Heart right ventricle (tissue), 16 donors: ENCODE measurements at regions of chr17 and their contacts with region 1.

Region 1: GRCh38 chr17:69480245-69480644 is 65.7 kb downstream of the MAP2K6 start:
- DNase-seq: no peak
- ATAC-seq: peak in 2 of 8 donors; percentile 63 to 69
- H3K4me3 ChIP-seq: no peak overlapping the region
- H3K27ac ChIP-seq: no peak overlapping the region
- H3K4me1 ChIP-seq: peaks cover 0 to 20% (median 4%) of the 10 kb centered on the region in 9 donors
- H3K27me3 ChIP-seq: no peaks in the 10 kb centered on the region
- CTCF ChIP-seq: no peak

Region 2: DNA sequence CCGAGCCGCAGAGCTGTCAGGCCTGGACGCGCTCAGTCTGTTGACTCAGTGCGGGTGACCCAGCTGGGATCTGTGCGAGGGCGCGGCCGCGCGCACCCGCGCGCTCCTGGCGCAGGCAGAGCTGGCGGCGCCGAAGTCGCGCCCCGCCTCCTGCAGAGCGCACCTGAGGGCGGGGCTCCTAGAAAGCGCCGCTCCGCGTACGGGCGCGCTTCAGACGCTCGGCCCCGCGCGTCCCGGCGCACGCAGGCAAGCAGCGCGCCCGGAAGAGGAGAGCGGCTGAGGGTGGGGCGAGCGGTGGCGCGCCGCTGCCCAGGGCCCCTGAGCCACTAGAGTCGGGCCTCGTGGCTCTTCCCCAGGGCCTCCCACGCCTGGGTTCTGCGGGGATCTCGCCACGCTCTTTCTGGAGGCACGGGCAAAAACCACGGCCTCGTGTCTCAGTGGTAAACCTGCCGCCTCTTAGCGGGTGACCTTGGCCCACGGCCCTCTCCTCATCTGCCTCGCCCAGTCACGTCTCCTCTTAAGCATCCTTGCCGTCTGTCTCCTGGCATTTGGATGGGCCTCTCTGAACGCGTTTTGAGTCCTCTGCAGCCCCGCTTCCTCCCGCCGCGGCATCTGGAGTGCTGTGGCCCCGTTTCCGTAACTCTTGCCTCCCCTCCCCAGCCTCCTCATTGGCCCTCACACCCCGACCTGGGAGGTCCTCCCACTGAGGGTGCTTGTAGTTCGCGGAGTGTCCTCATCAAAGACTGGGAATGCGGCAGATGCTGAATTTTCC is 153.0 kb before region 1 on chr17 and contains the start of gene ABCA5:
- intact Hi-C with region 1: loop called in 1 of 10 experiments (anchors 5 kb)
- DNase-seq: peak; percentile 78 to 86
- ATAC-seq: peak; percentile 96 to 100 (median 98)
- H3K4me3 ChIP-seq: peak within 1 kb of the TSS; percentile 59 to 95 (median 78)
- H3K27ac ChIP-seq: peak within 1 kb of the TSS; percentile 57 to 90 (median 86)
- H3K4me1 ChIP-seq: peaks cover 0 to 33% (median 12%) of the 10 kb centered on the region in 9 donors
- H3K27me3 ChIP-seq: peaks cover 0 to 7% (median 0%) of the 10 kb centered on the region in 7 donors
- CTCF ChIP-seq: no peak
- total RNA-seq, gene ABCA5: 16.2 to 26.6 (median 19.3) TPM

Region 3: DNA sequence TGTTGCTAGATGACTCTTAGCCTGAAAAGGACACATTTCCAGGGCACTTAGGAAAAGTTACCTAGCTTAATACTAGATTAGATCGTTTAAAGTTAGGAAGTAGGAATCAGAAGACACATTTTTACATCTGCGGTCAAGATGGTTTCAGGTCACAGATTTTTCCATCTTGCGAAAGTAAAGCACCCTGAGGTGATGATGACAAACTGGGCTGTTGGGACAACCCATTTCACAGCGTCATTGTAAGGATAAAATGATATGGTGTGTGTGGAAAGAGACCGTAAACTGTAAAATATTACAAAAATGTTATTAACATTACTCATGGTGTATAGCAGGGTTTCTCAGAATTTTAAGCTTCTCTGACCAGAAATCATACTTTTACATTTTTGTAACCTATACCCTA is 75.9 kb before region 1 on chr17:
- intact Hi-C with region 1: no loop called
- DNase-seq: no peak
- ATAC-seq: no peak
- H3K4me3 ChIP-seq: no peak overlapping the region
- H3K27ac ChIP-seq: no peak overlapping the region
- H3K4me1 ChIP-seq: no peaks in the 10 kb centered on the region
- H3K27me3 ChIP-seq: peaks cover 0 to 5% (median 0%) of the 10 kb centered on the region in 7 donors
- CTCF ChIP-seq: no peak